Naive thymus-derived CD8-positive, alpha-beta T cell (primary cell): ENCODE measurements at regions of chr7 and their contacts with region 1.

Region 1: GRCh38 chr7:30322271-30323005 is 38.0 kb downstream of the ZNRF2 start:
- DNase-seq: peak in 4 of 10 donors; percentile 17 to 40 (median 34)
- ATAC-seq: peak; percentile 83 to 85
- H3K4me3 Mint-ChIP-seq: peak overlapping the region; percentile 70 to 95 (median 86)
- H3K27ac Mint-ChIP-seq: peak overlapping the region; percentile 89 to 99 (median 94)
- H3K4me1 Mint-ChIP-seq: peaks cover 30 to 85% (median 63%) of the 10 kb centered on the region in 4 donors
- H3K27me3 Mint-ChIP-seq: no peaks in the 10 kb centered on the region

Region 2: DNA sequence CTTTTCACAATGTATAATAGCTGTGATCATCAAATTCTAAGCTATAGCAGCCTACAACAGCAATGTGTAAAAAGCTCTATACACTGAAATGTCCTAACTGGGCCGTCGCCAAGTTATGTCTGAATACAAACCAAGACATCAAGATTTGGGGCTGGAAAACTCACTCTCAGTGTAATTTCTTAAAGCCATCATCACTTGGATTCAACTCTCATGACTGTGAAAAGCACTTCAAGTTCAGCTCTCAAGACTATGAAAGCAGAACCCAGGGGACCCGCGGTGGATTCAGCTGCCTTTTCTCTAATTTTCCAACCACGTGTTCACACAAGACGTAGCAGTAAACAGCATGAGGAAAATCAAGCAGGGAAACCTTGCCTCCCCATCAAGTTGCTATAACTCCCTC is 53.9 kb before region 1 on chr7:
- POLR2A ChIA-PET with region 1: no interaction called
- DNase-seq: no peak
- ATAC-seq: no peak
- H3K4me3 Mint-ChIP-seq: no peak overlapping the region
- H3K27ac Mint-ChIP-seq: no peak overlapping the region
- H3K4me1 Mint-ChIP-seq: peaks cover 0 to 1% (median 0%) of the 10 kb centered on the region in 4 donors
- H3K27me3 Mint-ChIP-seq: peaks cover 0 to 6% (median 0%) of the 10 kb centered on the region in 5 donors

Region 3: DNA sequence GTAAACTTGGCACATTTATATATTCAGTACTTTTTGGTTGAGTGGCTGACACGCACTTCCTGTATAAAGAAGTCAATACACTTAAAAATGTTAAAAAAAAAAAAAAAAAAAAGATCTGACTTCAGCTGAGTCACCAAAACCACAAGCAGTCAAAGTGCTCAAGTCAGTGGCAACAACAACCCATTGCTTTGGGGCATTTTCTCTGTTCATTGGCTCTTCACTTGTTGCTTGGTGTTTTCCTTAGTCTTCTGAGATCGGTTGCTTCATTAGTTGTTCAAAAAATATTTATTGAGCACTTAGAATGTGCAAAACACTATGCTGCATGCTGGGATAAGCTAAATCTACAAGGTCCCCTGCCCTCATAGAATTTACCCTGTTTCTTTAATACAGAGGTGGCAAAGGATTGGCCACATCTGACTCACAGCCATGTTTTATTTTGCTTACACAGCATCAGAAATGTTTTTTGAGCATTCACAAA is 25.7 kb after region 1 on chr7:
- POLR2A ChIA-PET with region 1: interaction called, 11 read pairs
- DNase-seq: peak in 9 of 10 donors; percentile 37 to 79 (median 56)
- ATAC-seq: peak; percentile 92 to 93
- H3K4me3 Mint-ChIP-seq: peak overlapping the region; percentile 1 to 75 (median 57)
- H3K27ac Mint-ChIP-seq: peak overlapping the region; percentile 34 to 98 (median 73)
- H3K4me1 Mint-ChIP-seq: peaks cover 15 to 84% (median 43%) of the 10 kb centered on the region in 4 donors
- H3K27me3 Mint-ChIP-seq: no peaks in the 10 kb centered on the region